ENCODE measurements at regions of chr5 and their contacts with region 1.

Region 1: GRCh38 chr5:6377905-6378765 is at the start of gene MED10:
- DNase-seq: peak; percentile 98
- total RNA-seq, gene MED10: 27.6 TPM

Region 2: DNA sequence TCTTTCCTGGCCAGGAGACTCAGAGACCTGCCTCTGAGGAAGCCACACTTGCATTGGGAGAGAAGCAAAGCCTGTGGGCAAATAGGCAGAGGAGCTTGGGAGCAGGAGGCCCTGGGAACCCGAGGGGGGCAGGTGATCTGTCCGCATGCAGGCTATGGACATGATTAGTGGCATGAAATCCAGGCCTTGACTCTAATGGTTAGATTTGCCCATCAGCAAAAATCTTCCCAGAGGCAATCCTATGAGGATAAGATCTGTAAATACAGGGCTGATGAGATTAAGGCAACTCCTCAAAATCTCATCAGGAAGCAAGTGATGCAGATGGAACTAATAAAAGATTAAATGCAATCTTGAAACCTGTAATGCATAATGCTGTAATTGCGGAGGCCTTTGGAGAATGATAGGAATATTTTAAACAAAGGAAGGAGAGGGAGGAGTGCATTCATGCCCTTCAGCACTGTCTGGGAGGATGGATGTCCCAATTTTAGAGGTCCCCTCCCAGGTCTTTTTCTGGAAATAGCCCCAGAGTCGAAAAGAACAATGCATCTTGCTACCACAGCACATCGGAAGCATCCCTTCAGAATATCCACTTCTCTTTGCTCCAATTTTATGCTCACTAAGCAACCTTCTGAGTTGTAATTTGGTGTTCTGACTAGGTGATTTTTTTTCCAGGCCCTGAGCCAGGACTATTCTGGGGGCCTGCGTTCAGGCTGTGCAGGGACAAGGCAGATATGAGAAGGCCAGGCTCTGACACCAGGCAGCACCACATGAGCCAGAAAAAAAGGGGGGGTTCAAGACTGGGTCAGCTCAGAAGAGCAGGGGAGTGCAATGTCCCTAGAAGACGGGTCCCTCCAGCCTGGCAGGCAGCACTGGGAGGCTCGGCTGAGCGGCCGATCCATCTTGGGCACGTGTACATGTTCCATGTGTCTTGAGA is 66.3 kb before region 1 on chr5:
- intact Hi-C with region 1: loop called (anchors 5 kb)
- DNase-seq: peak; percentile 79

Region 3: GRCh38 chr5:6448622-6449464 is 70.7 kb after region 1 on chr5 and contains the start of gene UBE2QL1:
- intact Hi-C with region 1: loop called (anchors 5 kb)
- DNase-seq: peak; percentile 69
- total RNA-seq, gene UBE2QL1: 13.1 TPM

Region 4: DNA sequence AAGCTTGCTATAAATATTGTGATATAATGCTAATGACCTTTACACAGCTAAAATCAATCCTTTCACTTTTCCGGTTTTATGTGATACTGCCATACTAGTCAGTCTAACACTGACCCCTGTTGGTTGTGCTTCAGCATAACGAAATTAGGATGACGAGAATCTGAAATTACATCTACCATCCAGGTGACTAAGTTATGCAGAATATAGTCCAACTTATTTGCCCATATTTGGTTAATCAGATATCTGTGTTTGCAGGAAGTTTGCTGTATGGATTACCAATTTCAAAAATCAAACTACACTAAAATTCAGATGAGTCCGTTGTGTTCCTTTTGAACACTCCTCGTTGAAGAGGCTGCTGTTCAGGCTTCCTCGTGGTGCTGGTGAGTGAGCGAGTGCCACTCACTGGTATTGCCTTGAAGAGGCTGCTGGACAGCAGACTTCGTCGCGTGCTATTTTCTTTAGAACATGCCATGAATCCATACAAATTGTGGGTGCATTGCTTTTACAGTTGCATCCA is 367.6 kb after region 1 on chr5:
- intact Hi-C with region 1: loop called (anchors 10 kb)
- DNase-seq: no peak

Measured in cardiac septum (tissue), 1 donor.